Right cardiac atrium (tissue), 5 donors: ENCODE measurements at regions of chr19 and their contacts with region 1.

Region 1: DNA sequence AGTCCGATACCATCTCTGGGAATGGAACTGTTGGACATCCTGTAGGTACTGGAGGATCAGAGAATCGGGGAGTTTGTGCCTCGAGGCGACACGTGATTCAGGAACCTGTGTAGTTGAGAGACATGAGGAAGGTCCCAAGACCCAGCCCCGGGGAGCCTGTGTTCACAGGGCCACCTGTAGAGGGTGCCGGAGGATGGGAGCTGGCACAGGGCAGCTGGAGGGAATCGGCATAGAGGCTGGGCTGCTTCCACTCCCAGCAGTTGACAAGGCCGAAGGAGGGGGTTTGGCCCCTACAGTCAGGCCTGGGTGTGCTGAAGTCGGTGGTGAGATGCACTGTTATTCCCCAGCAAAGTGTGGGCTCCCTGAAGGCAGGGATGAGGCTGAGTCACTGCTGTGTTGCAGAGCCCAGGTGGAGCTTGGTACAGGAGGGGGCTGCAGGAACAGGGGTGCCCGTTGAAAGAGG is 2.5 kb upstream of the ISYNA1 start:
- DNase-seq: peak in 1 of 3 donors; percentile 67
- ATAC-seq: no peak
- H3K4me3 ChIP-seq: no peak overlapping the region
- H3K27ac ChIP-seq: no peak overlapping the region
- H3K4me1 ChIP-seq: peaks cover 6% of the 10 kb centered on the region
- H3K27me3 ChIP-seq: no peaks in the 10 kb centered on the region

Region 2: GRCh38 chr19:18856385-18857126 is 416.1 kb after region 1 on chr19:
- intact Hi-C with region 1: loop called in 2 of 4 experiments (anchors 10 kb)
- DNase-seq: no peak
- ATAC-seq: no peak
- H3K4me3 ChIP-seq: no peak overlapping the region
- H3K27ac ChIP-seq: no peak overlapping the region
- H3K4me1 ChIP-seq: no peaks in the 10 kb centered on the region
- H3K27me3 ChIP-seq: no peaks in the 10 kb centered on the region

Region 3: DNA sequence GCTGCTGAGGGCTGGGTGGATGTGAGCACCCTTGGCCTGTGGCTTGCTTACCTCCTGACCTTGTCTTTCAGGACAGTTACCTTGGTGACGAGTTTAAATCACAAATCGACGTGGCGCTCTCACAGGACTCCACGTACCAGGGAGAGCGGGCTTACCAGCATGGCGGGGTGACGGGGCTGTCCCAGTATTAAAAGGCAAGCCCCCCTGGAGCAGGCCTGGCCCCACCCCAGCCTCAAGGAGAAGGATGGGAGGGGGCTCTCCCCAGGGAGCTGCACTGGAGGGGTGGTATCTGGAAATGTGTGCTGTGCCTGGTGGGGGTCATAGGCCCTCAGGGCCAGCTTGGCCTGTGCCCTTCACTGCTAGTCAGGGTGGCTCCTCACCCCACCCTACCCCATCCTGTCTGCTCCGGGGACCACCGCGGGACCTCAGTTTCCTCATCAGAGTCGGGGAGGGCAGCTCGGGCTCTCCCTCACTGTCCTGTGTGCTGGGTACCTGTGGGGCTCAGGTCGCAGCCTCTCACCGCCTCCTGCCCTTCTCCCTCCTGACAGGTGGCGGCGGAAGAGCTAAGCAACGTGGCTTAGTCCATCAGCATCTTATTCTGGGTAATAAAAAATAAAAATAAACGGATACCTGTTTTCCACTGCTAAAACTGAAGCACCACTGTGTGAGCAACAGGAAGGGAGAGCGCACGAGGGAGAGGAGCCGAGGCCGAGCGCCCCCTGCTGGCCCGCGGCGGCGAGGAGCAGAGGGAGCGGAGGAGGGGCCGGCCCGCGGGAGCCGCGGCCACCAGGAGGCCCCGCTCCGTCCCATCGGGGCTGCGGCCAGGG is 425.7 kb after region 1 on chr19:
- intact Hi-C with region 1: loop called in 1 of 4 experiments (anchors 10 kb)
- DNase-seq: peak; percentile 64 to 89 (median 87)
- ATAC-seq: peak; percentile 78 to 79
- H3K4me3 ChIP-seq: no peak overlapping the region
- H3K27ac ChIP-seq: no peak overlapping the region
- H3K4me1 ChIP-seq: no peaks in the 10 kb centered on the region
- H3K27me3 ChIP-seq: no peaks in the 10 kb centered on the region